WTC11 (cell line): ENCODE measurements at regions of chr16 and their contacts with region 1.

Region 1: GRCh38 chr16:9008601-9009260 is 45.0 kb upstream of the USP7 start:
- DNase-seq: peak; percentile 92
- ATAC-seq: peak; percentile 88
- H3K4me3 Mint-ChIP-seq: peak overlapping the region; percentile 25; the same call in 1 of the 2 replicates
- H3K27ac Mint-ChIP-seq: no peak overlapping the region
- H3K4me1 Mint-ChIP-seq: peaks cover 6% of the 10 kb centered on the region
- H3K27me3 Mint-ChIP-seq: no peaks in the 10 kb centered on the region; the same call in none of the 2 replicates
- CTCF ChIP-seq: peak; percentile 80

Region 2: GRCh38 chr16:8832717-8833105 is 176.0 kb before region 1 on chr16:
- CTCF ChIA-PET with region 1: interaction called, 12 read pairs
- POLR2A ChIA-PET with region 1: interaction called, 4 read pairs
- DNase-seq: no peak
- ATAC-seq: peak; percentile 12
- H3K4me3 Mint-ChIP-seq: peak overlapping the region; percentile 48
- H3K27ac Mint-ChIP-seq: peak overlapping the region; percentile 100
- H3K4me1 Mint-ChIP-seq: peaks cover 62% of the 10 kb centered on the region
- H3K27me3 Mint-ChIP-seq: no peaks in the 10 kb centered on the region
- CTCF ChIP-seq: no peak

Region 3: DNA sequence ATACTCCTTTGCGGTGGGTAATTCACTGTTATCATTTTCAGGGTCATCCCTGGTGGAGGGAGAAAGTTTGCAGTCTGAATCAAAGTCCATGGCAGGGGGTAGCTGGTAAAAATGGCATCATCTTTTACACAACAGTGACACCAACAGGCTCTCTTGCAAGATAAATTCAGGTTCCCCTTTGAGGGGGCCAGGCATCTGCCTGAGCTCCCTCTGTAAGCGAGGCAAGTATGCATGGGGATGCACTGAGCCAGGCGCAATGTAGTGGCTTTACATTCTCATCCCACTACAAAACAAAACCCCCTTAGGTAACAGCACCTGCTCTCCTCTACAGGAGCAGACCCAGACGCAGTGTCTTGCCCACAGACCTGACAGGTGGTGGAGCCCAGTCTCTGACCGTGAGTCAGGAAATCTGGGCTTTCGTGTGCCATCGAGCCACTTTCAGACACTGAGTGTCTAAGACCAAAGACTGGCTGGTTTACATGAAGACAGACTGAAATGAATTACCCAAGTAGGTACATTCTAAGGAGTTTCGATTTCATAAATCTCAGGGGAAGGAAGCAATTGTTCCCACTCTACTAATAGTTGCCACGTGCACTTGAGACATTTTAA is 108.9 kb before region 1 on chr16:
- CTCF ChIA-PET with region 1: interaction called, 11 read pairs
- POLR2A ChIA-PET with region 1: interaction called, 3 read pairs
- DNase-seq: no peak
- ATAC-seq: peak; percentile 65
- H3K4me3 Mint-ChIP-seq: no peak overlapping the region
- H3K27ac Mint-ChIP-seq: peak overlapping the region; percentile 37
- H3K4me1 Mint-ChIP-seq: no peaks in the 10 kb centered on the region
- H3K27me3 Mint-ChIP-seq: no peaks in the 10 kb centered on the region
- CTCF ChIP-seq: no peak

Region 4: GRCh38 chr16:8936421-8936820 is 72.3 kb before region 1 on chr16:
- CTCF ChIA-PET with region 1: interaction called, 436 read pairs
- POLR2A ChIA-PET with region 1: interaction called, 9 read pairs
- DNase-seq: peak; percentile 76
- ATAC-seq: peak; percentile 90
- H3K4me3 Mint-ChIP-seq: no peak overlapping the region
- H3K27ac Mint-ChIP-seq: peak overlapping the region; percentile 34; the same call in 1 of the 2 replicates
- H3K4me1 Mint-ChIP-seq: peaks cover 71% of the 10 kb centered on the region
- H3K27me3 Mint-ChIP-seq: no peaks in the 10 kb centered on the region
- CTCF ChIP-seq: peak; percentile 39; the same call in 1 of the 2 replicates

Region 5: DNA sequence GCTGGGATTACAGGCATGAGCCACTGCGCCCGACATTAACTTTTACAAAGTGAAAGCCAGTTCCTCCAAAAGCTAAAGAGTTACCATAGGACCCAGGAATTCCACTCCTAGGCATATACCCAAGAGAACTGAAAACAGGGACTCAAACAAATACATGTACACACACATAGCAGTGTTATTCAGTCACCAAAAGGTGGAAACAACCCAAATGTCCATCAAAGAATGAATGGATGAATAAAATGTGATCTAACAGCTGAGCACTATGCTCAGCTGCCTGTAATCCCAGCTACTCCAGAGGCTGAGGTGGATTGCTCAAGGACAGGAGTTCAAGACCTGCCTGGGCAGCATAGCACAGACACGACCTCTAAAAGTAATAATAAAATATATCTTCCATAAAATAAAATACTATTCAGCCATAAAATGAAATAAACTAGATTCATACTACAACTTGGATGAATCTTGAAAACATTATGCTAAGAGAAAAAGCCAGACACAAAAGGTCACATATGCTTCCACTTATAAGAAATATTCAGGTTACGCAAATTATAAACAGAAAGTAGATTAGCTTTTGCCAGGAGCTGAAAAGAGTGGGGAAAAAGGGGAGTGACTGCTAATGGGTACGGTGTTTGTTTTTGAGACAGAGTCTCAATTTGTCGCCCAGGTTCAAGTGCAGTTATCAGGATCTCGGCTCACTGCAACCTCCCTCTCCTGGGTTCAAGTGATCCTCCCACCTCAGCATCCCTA is 35.7 kb before region 1 on chr16:
- CTCF ChIA-PET with region 1: interaction called, 16 read pairs
- POLR2A ChIA-PET with region 1: interaction called, 4 read pairs
- DNase-seq: no peak
- ATAC-seq: no peak
- H3K4me3 Mint-ChIP-seq: no peak overlapping the region
- H3K27ac Mint-ChIP-seq: no peak overlapping the region
- H3K4me1 Mint-ChIP-seq: peaks cover 3% of the 10 kb centered on the region
- H3K27me3 Mint-ChIP-seq: peaks cover 4% of the 10 kb centered on the region
- CTCF ChIP-seq: no peak

Region 6: GRCh38 chr16:9033125-9033830 is 24.5 kb after region 1 on chr16:
- CTCF ChIA-PET with region 1: interaction called, 47 read pairs
- POLR2A ChIA-PET with region 1: interaction called, 5 read pairs
- DNase-seq: peak; percentile 74
- ATAC-seq: peak; percentile 85
- H3K4me3 Mint-ChIP-seq: no peak overlapping the region
- H3K27ac Mint-ChIP-seq: no peak overlapping the region
- H3K4me1 Mint-ChIP-seq: no peaks in the 10 kb centered on the region
- H3K27me3 Mint-ChIP-seq: no peaks in the 10 kb centered on the region
- CTCF ChIP-seq: peak; percentile 31; the same call in 1 of the 2 replicates

Region 7: GRCh38 chr16:9077091-9077809 is 68.5 kb after region 1 on chr16:
- CTCF ChIA-PET with region 1: no interaction called
- POLR2A ChIA-PET with region 1: no interaction called
- DNase-seq: no peak
- ATAC-seq: no peak
- H3K4me3 Mint-ChIP-seq: no peak overlapping the region
- H3K27ac Mint-ChIP-seq: no peak overlapping the region
- H3K4me1 Mint-ChIP-seq: peaks cover 3% of the 10 kb centered on the region; the same call in 1 of the 2 replicates
- H3K27me3 Mint-ChIP-seq: peaks cover 3% of the 10 kb centered on the region; the same call in 1 of the 2 replicates
- CTCF ChIP-seq: no peak